ENCODE measurements at regions of chr12 and their contacts with region 1.

Region 1: DNA sequence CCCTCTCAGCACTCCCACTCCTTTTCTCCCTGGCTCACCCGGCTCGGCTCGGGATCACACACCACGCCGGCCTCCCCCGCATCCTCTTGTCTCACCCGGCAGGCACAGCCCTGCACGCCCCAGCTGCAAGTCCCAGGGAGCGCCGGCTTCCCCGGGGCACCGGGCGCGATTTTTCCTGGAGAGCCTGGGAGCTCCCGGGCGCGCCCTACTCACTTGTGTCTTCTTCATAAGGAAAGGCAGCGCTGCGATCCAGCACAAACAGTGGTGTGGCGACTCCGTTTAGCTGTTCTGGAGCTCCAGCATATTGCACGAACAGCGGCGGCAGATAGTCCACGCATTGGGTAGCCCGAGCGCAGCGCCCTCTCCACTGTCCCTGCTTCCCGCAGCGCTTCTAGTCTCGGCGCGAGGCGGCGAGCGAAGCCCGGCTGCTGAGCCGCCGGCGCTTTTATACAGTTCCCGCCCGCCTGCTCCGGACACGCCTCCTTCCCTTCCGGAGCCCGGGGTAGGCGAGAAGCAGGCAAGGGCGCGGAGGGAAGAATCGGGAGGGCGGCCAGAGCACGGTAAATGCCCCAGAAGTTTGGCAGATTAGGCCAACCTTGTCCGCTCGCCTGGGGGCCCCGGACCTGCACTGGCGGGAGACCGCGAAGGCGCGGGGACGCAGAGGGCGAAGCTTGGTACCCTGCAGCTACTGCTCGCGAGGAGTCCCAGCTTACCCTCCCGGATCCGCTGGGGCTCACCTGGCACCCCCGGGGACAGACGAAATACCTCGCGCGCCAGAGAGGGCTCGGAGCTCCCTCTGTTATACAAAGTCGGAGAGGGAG is at the start of gene KITLG:
- DNase-seq: peak; percentile 87
- ATAC-seq: peak; percentile 91
- H3K4me3 ChIP-seq: peak within 1 kb of the TSS; percentile 52
- H3K27ac ChIP-seq: peak within 1 kb of the TSS; percentile 75
- H3K4me1 ChIP-seq: no peaks in the 10 kb centered on the region
- H3K27me3 ChIP-seq: no peaks in the 10 kb centered on the region
- CTCF ChIP-seq: peak; percentile 52
- POLR2A ChIP-seq: peak; percentile 98
- RAD21 ChIP-seq: peak; percentile 57
- total RNA-seq, gene KITLG: 87.5 and 117 TPM in 2 replicates

Region 2: GRCh38 chr12:88153959-88154358 is 426.3 kb before region 1 on chr12:
- CTCF ChIA-PET with region 1: interaction called, 3 read pairs
- POLR2A ChIA-PET with region 1: no interaction called
- dilution Hi-C with region 1: no loop called
- in situ Hi-C with region 1: no loop called
- intact Hi-C with region 1: loop called (anchors 1 kb)
- DNase-seq: peak; percentile 70
- ATAC-seq: no peak
- H3K4me3 ChIP-seq: no peak overlapping the region
- H3K27ac ChIP-seq: no peak overlapping the region
- H3K4me1 ChIP-seq: no peaks in the 10 kb centered on the region
- H3K27me3 ChIP-seq: no peaks in the 10 kb centered on the region
- CTCF ChIP-seq: peak; percentile 59
- POLR2A ChIP-seq: no peak
- RAD21 ChIP-seq: peak; percentile 67

Region 3: DNA sequence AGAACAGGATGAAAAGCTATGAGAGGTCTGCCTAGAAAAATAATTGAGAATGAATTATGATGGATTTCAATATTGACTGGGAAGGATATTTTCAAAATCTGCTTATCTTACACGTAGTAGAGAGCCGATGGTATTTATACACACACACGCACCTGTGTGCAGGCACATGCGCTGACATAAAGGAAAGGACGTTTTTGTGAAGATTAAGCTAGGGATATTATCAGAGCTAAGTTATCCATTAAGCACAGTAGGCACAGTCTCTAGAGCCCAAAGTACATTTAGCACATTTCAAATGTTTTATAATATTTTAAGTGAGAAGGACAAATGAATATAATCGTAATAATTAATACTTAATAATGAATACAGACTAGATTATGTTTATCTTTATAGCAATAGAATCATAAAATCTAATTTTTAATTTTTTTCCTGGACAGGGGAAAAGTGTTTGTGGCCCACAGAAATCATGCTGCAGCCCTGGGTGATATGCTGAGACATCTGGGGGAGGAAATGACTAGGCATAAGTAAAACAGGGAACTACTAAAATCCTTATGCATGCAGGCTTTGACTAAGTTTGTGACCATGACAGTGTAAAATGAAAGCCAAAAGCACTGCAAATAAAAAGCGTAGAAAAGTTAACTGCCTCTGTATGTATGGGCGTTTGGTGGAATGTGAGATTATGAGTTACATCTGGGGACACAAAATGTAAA is 146.1 kb before region 1 on chr12:
- CTCF ChIA-PET with region 1: no interaction called
- POLR2A ChIA-PET with region 1: no interaction called
- dilution Hi-C with region 1: no loop called
- in situ Hi-C with region 1: no loop called
- intact Hi-C with region 1: no loop called
- DNase-seq: peak; percentile 74
- ATAC-seq: peak; percentile 63; the same call in 1 of the 2 replicates
- H3K4me3 ChIP-seq: no peak overlapping the region
- H3K27ac ChIP-seq: no peak overlapping the region
- H3K4me1 ChIP-seq: peaks cover 8% of the 10 kb centered on the region; the same call in 1 of the 2 replicates
- H3K27me3 ChIP-seq: no peaks in the 10 kb centered on the region
- CTCF ChIP-seq: no peak
- POLR2A ChIP-seq: no peak
- RAD21 ChIP-seq: no peak

Region 4: GRCh38 chr12:88453323-88453722 is 126.9 kb before region 1 on chr12:
- CTCF ChIA-PET with region 1: no interaction called
- POLR2A ChIA-PET with region 1: no interaction called
- dilution Hi-C with region 1: no loop called
- in situ Hi-C with region 1: no loop called
- intact Hi-C with region 1: no loop called
- DNase-seq: peak; percentile 72
- ATAC-seq: peak; percentile 72
- H3K4me3 ChIP-seq: no peak overlapping the region
- H3K27ac ChIP-seq: no peak overlapping the region
- H3K4me1 ChIP-seq: peaks cover 3% of the 10 kb centered on the region; the same call in 1 of the 2 replicates
- H3K27me3 ChIP-seq: no peaks in the 10 kb centered on the region
- CTCF ChIP-seq: no peak
- POLR2A ChIP-seq: no peak
- RAD21 ChIP-seq: no peak

Region 5: GRCh38 chr12:88638966-88639760 is 58.9 kb after region 1 on chr12:
- CTCF ChIA-PET with region 1: no interaction called
- POLR2A ChIA-PET with region 1: interaction called, 3 read pairs
- dilution Hi-C with region 1: no loop called
- in situ Hi-C with region 1: no loop called
- intact Hi-C with region 1: loop called (anchors 5 kb)
- DNase-seq: peak; percentile 72
- ATAC-seq: peak; percentile 78
- H3K4me3 ChIP-seq: peak overlapping the region; percentile 15; the same call in 1 of the 2 replicates
- H3K27ac ChIP-seq: peak overlapping the region; percentile 9; the same call in 1 of the 2 replicates
- H3K4me1 ChIP-seq: peaks cover 2% of the 10 kb centered on the region
- H3K27me3 ChIP-seq: no peaks in the 10 kb centered on the region
- CTCF ChIP-seq: no peak
- POLR2A ChIP-seq: no peak
- RAD21 ChIP-seq: no peak

Region 6: GRCh38 chr12:88884600-88884999 is 304.3 kb after region 1 on chr12:
- CTCF ChIA-PET with region 1: no interaction called
- POLR2A ChIA-PET with region 1: no interaction called
- dilution Hi-C with region 1: no loop called
- in situ Hi-C with region 1: no loop called
- intact Hi-C with region 1: loop called (anchors 5 kb)
- DNase-seq: no peak
- ATAC-seq: no peak
- H3K4me3 ChIP-seq: no peak overlapping the region
- H3K27ac ChIP-seq: no peak overlapping the region
- H3K4me1 ChIP-seq: no peaks in the 10 kb centered on the region
- H3K27me3 ChIP-seq: no peaks in the 10 kb centered on the region
- CTCF ChIP-seq: no peak
- POLR2A ChIP-seq: no peak
- RAD21 ChIP-seq: no peak

Region 7: GRCh38 chr12:89524541-89525285 is 944.5 kb after region 1 on chr12 and contains the start of gene GALNT4:
- CTCF ChIA-PET with region 1: no interaction called
- POLR2A ChIA-PET with region 1: no interaction called
- dilution Hi-C with region 1: no loop called
- in situ Hi-C with region 1: no loop called
- intact Hi-C with region 1: loop called (anchors 10 kb)
- DNase-seq: peak; percentile 85
- ATAC-seq: peak; percentile 81
- H3K4me3 ChIP-seq: peak within 1 kb of the TSS; percentile 88
- H3K27ac ChIP-seq: peak within 1 kb of the TSS; percentile 90
- H3K4me1 ChIP-seq: peaks cover 11% of the 10 kb centered on the region
- H3K27me3 ChIP-seq: no peaks in the 10 kb centered on the region
- CTCF ChIP-seq: peak; percentile 70
- POLR2A ChIP-seq: peak; percentile 19; the same call in 1 of the 2 replicates
- RAD21 ChIP-seq: peak; percentile 58
- total RNA-seq, gene GALNT4: 9.0 and 14.2 TPM in 2 replicates

Measured in IMR-90 (cell line).